ENCODE measurements at regions of chr10 and their contacts with region 1.

Region 1: DNA sequence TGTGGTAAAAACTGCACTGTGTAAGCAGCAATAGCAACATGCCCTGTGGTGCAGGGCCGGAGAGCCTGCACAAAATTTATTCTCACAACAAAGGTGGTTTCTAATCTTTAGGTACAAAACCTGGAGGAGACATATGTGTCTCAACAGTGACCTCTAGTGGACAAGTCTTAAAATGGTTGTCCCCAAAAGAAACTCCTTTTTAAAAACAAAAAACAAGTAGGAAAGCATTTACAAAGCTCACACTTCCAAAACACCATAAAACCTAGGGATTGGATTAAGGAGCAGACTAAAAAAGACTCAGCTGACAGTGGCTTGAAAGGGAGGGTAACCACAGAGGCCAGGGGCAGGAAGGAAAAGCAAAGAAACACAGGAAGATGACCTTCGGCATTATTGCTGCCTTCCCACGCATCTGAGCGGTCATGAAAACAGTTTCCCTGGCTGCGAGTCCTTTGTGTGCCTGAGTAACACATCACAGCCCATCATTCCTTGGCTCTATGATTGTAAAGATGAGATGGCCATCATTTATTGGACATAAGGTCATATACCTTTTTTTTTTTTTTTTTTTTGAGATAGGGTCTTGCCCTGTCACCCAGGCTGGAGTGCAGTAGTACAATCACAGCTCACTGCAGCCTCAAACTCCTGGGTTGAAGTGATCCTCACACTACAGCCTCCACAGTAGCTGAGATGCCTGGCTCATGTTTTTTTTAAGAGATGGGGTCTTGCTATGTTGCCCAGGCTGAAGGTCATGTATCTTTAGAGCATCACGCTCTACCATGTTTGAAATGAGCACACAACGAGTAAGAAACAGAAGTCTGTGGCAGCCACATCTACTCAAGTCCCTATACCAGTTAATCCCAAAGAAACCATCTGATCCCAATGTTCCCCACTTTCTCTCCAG is 39.5 kb downstream of the RSU1 start:
- DNase-seq: peak; percentile 32
- H3K4me3 ChIP-seq: no peak overlapping the region
- H3K27ac ChIP-seq: no peak overlapping the region
- H3K27me3 ChIP-seq: no peaks in the 10 kb centered on the region
- CTCF ChIP-seq: peak; percentile 69

Region 2: GRCh38 chr10:16717622-16718395 is 59.9 kb before region 1 on chr10:
- CTCF ChIA-PET with region 1: no interaction called
- POLR2A ChIA-PET with region 1: no interaction called
- DNase-seq: peak; percentile 36
- H3K4me3 ChIP-seq: no peak overlapping the region
- H3K27ac ChIP-seq: no peak overlapping the region
- H3K27me3 ChIP-seq: no peaks in the 10 kb centered on the region
- CTCF ChIP-seq: no peak

Region 3: GRCh38 chr10:16765509-16766375 is 12.0 kb before region 1 on chr10:
- CTCF ChIA-PET with region 1: interaction called, 36 read pairs
- POLR2A ChIA-PET with region 1: no interaction called
- DNase-seq: no peak
- H3K4me3 ChIP-seq: no peak overlapping the region
- H3K27ac ChIP-seq: peak overlapping the region; percentile 21
- H3K27me3 ChIP-seq: no peaks in the 10 kb centered on the region
- CTCF ChIP-seq: no peak

Region 4: DNA sequence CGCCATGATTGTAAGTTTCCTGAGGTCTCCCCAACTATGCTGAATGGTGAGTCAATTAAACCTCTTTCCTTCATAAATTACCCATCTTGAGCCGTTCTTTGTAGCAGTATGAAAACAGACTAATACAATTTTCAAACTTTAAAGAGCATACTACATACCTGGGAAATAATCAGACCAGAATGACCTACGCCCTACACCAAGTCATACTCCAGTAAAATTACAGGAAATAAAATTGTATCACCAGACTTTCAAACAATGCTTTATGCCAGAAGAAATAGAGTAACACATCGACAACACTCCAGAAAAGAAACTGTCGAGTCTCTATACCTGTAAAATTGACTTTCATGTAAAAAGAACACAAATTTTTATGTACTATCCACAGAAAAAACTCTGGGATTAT is 20.8 kb after region 1 on chr10:
- CTCF ChIA-PET with region 1: interaction called, 17 read pairs
- POLR2A ChIA-PET with region 1: no interaction called
- DNase-seq: no peak
- H3K4me3 ChIP-seq: no peak overlapping the region
- H3K27ac ChIP-seq: no peak overlapping the region
- H3K27me3 ChIP-seq: no peaks in the 10 kb centered on the region
- CTCF ChIP-seq: no peak

Region 5: DNA sequence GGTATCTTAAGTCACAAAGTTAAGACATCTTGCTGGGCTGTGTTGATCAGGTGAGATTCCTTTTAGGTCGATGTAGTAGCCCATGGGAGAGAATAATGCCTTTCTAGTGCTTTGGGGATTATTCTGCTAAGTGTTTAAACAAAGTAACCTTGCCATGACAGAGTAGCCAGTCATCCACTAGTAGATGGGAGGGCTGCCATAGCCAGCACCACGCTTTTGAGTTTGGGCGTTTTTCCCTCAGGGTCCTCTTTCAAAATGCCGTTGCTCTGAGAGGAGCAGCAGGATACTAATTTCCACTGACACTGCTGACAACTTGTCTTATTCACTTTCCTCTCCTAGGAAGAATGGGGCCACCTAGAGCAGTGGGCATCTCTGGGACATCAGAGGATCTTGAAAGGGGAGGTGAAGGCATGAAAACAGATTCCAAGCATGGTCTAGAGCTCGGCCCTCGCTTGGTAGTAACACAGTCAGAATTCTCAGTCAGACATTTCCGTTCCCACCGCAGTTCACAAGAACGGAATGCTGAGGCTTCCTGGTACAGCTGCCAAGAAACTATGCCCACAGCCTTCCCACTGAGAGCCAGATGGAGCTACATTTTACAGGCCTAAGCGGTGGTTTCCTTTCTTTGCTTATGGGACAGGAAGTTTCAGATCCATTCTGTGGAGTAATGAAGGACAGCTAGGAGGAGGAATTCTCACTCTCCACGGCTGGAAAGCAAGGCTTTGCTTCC is 54.8 kb after region 1 on chr10:
- CTCF ChIA-PET with region 1: no interaction called
- POLR2A ChIA-PET with region 1: no interaction called
- DNase-seq: peak; percentile 63
- H3K4me3 ChIP-seq: no peak overlapping the region
- H3K27ac ChIP-seq: peak overlapping the region; percentile 65
- H3K27me3 ChIP-seq: no peaks in the 10 kb centered on the region
- CTCF ChIP-seq: no peak

Region 6: DNA sequence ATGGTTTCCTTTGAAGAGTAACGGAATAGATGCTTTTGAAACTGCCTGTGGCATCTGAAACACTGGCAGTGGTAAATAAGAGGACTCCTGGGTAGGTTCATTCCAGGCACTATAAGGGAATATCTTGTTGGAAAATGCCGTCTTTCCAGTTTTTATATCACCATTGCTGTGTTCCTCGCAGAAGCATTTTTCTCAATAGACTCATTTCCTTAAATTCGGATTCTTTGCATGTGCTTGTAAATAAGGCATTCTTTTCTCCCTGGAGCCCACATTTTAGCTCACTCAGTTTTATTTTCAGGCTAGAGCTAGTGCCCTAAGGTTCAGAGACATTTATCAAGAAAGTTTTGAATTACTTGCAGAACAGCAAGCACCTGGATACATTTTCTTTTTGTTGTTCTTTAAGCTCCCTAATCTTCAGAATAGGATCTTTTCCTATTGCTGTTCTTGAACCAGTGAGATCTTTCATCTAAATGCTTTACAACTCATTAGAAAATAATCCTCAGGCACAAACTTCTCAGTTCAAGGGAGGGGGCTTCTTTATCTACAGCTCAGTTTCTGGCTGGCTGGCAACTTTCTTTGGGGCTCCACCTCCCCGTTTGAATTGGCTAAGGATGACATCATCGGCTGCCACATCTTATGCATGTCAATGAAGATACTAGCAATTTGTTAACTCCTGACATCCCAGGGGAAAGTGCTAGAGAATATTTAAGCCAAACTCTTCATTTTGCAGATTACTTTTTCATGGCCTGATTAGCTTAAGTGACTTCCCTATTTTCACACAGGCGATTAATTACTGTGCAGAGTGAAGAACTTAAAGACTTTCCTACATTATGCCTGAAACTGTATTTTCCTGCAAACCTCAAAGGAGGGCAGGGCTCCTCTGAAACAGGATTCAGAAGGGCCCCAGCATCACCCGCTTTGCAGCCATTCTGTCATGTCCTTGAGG is 173.2 kb after region 1 on chr10:
- CTCF ChIA-PET with region 1: no interaction called
- POLR2A ChIA-PET with region 1: no interaction called
- DNase-seq: no peak
- H3K4me3 ChIP-seq: no peak overlapping the region
- H3K27ac ChIP-seq: no peak overlapping the region
- H3K27me3 ChIP-seq: no peaks in the 10 kb centered on the region
- CTCF ChIP-seq: no peak

Measured in AG04450 (cell line).